ENCODE measurements at regions of chr13 and their contacts with region 1.

Region 1: GRCh38 chr13:59677966-59678814 is 485.5 kb downstream of the DIAPH3 start:
- DNase-seq: no peak
- ATAC-seq: no peak
- H3K4me3 Mint-ChIP-seq: no peak overlapping the region
- H3K27ac Mint-ChIP-seq: no peak overlapping the region
- H3K4me1 Mint-ChIP-seq: peaks cover under 1% of the 10 kb centered on the region
- H3K27me3 Mint-ChIP-seq: no peaks in the 10 kb centered on the region
- CTCF ChIP-seq: no peak

Region 2: DNA sequence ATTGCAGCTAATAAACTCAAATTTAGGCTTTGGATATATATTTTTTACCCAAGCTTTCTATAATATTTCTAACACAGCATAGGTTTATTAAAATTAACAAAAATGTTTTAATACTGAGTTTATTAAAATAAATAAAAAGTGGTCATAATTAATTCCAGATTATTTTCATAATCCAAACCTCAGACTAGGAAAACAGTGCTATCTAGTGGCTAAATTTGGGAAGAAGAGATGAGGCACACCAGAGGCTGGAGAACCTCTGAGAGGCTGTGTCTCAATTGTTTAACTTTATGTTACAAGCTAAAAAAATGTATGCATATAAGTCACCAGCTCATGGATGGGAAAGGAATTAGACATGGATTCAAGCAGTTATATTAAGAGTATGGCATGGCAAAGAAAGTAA is 93.1 kb after region 1 on chr13:
- CTCF ChIA-PET with region 1: interaction called, 15 read pairs
- POLR2A ChIA-PET with region 1: no interaction called
- intact Hi-C with region 1: loop called (anchors 1 kb)
- DNase-seq: no peak
- ATAC-seq: no peak
- H3K4me3 Mint-ChIP-seq: no peak overlapping the region
- H3K27ac Mint-ChIP-seq: no peak overlapping the region
- H3K4me1 Mint-ChIP-seq: no peaks in the 10 kb centered on the region
- H3K27me3 Mint-ChIP-seq: no peaks in the 10 kb centered on the region
- CTCF ChIP-seq: no peak

Region 3: DNA sequence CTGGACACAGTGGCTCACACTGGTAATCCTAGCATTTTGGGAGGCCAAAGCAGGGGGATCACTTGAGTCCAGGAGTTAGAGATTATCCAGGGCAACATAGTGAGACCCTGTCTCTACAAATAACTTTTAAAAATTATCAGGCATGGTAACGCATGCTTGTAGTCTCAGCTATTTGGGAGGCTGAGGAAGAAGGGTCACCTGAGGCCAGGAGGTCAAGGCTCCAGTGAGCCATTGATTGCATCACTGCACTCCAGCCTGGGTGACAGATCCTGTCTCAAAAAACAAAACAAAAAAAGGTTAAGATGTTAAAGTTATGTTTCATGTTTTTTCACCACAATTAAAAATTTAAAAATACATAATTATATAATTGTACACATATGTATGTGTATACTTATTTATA is 504.7 kb after region 1 on chr13:
- CTCF ChIA-PET with region 1: no interaction called
- POLR2A ChIA-PET with region 1: no interaction called
- intact Hi-C with region 1: no loop called
- DNase-seq: no peak
- ATAC-seq: no peak
- H3K4me3 Mint-ChIP-seq: no peak overlapping the region
- H3K27ac Mint-ChIP-seq: no peak overlapping the region
- H3K4me1 Mint-ChIP-seq: no peaks in the 10 kb centered on the region
- H3K27me3 Mint-ChIP-seq: peaks cover 5% of the 10 kb centered on the region
- CTCF ChIP-seq: no peak

Region 4: DNA sequence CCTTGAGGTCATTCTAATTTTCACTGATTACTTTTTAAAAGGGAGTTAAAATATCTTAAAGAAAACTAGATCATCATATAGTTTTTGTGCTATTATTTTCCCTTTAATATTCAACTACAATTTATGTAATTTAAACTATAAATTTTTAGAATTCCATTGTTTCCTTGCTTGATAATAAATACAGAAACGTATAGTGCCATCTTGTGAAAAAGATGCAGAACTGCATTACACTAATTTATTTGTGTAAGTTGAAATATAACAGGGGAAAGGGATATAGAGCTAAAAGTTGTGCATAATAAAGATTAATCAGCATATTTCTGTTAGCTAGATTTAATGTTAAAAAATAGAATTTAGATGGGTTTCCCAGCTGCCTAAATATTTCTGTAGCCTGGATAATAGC is 657.3 kb after region 1 on chr13:
- CTCF ChIA-PET with region 1: no interaction called
- POLR2A ChIA-PET with region 1: no interaction called
- intact Hi-C with region 1: loop called (anchors 1 kb)
- DNase-seq: no peak
- ATAC-seq: no peak
- H3K4me3 Mint-ChIP-seq: no peak overlapping the region
- H3K27ac Mint-ChIP-seq: no peak overlapping the region
- H3K4me1 Mint-ChIP-seq: no peaks in the 10 kb centered on the region
- H3K27me3 Mint-ChIP-seq: peaks cover 8% of the 10 kb centered on the region
- CTCF ChIP-seq: peak; percentile 38

Measured in activated B cell treated with CpG ODN at 0.5 μM for 24 hours (primary cell).